HEK293 (cell line): ENCODE measurements at regions of chr7 and their contacts with region 1.

Region 1: GRCh38 chr7:5997222-5997808 is 11.5 kb downstream of the PMS2 start:
- H3K4me3 ChIP-seq: no peak overlapping the region
- H3K27ac ChIP-seq: no peak overlapping the region
- H3K4me1 ChIP-seq: peaks cover 8% of the 10 kb centered on the region
- CTCF ChIP-seq: no peak; the same call in 1 of the 2 replicates

Region 2: DNA sequence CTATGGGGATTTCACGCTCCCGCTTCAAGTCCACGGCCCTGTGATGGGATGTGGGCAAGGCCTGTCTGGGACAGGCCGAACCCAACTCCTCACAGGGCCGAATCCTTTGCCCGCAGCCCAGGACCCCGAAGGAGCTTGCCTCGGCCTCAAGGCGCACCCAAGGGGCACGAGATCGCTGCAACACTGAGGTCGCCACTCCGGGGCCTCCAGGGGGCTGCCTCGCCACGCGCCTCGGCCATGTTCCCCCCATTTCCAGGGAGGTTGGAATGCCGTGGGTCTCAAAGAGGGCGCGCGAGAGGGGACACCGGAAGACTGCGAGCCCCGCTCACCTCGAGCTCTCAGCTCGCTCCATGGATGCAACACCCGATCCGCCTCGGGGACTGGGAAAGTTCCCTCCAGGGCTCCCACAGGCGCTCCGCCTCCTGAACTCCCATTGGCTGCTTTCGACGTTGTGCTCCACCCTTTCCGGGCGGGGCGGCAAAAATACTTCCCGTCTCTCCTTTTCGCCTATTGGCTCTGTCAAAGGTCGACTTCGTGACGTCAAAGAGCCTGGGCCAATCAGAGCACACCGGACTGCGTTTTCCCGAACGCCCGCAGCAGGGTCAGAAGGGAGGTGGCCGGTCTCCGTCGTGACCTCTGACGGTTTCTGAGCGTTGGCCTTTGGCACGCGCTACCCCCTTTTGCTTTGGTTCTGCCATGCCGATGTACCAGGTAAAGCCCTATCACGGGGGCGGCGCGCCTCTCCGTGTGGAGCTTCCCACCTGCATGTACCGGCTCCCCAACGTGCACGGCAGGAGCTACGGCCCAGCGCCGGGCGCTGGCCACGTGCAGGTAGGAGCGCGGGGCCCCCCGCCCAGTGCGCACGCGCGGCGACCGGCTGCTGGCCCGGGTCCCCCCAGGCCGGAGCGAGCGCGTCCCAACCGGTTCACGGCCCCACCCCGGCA is 11.6 kb after region 1 on chr7 and contains the starts of genes AIMP2 and PMS2:
- CTCF ChIA-PET with region 1: interaction called, 10 read pairs
- POLR2A ChIA-PET with region 1: interaction called, 10 read pairs
- H3K4me3 ChIP-seq: peak within 1 kb of the TSS; percentile 69
- H3K27ac ChIP-seq: peak within 1 kb of the TSS; percentile 80
- H3K4me1 ChIP-seq: no peaks in the 10 kb centered on the region; the same call in 1 of the 2 replicates
- CTCF ChIP-seq: peak; percentile 85

Region 3: GRCh38 chr7:6106140-6106904 is 109.0 kb after region 1 on chr7:
- CTCF ChIA-PET with region 1: interaction called, 28 read pairs
- POLR2A ChIA-PET with region 1: interaction called, 3 read pairs
- H3K4me3 ChIP-seq: peak overlapping the region; percentile 67
- H3K27ac ChIP-seq: no peak overlapping the region
- H3K4me1 ChIP-seq: no peaks in the 10 kb centered on the region
- CTCF ChIP-seq: peak; percentile 46; the same call in 1 of the 2 replicates

Region 4: DNA sequence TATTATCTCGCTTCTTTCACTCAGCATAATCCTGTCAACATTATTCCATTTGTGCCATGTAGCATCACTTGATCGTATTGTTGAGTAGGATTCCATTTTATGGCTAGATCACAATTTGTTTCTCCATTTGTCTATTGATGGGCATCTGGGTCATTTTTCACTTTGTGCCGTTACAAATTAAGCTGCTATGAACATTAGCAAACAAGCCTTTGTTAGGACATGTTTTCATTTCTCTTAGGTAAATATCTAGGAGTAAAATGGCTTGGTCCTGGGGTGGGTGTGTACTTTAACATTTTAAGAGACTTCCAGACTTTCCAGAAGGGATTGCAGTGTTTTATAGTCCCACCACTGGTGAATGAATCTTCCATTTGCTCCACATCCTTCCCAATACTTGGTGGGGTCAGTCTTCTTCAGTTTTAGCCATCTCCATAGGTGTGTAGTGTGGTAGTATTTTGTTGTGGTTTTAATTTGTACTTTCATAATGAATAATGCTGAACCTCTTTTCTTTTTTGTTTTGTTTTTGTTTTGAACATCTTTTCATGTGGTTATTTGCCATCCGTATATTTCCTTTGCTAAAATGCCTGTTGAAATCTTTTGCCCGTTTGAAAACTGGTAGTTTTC is 120.1 kb after region 1 on chr7:
- CTCF ChIA-PET with region 1: interaction called, 12 read pairs
- POLR2A ChIA-PET with region 1: no interaction called
- H3K4me3 ChIP-seq: no peak overlapping the region
- H3K27ac ChIP-seq: no peak overlapping the region
- H3K4me1 ChIP-seq: no peaks in the 10 kb centered on the region
- CTCF ChIP-seq: no peak